Pancreas (tissue), 10 donors: ENCODE measurements at regions of chr1 and their contacts with region 1.

Region 1: GRCh38 chr1:1402081-1402900 is 3.2 kb upstream of the CCNL2 start:
- DNase-seq: peak in 3 of 6 donors; percentile 43 to 54 (median 50)
- ATAC-seq: no peak
- H3K4me3 ChIP-seq: no peak overlapping the region
- H3K27ac ChIP-seq: no peak overlapping the region
- H3K4me1 ChIP-seq: peaks cover 12 to 30% (median 23%) of the 10 kb centered on the region in 3 donors
- H3K27me3 ChIP-seq: no peaks in the 10 kb centered on the region
- CTCF ChIP-seq: peak in 3 of 4 donors; percentile 15 to 24 (median 21)

Region 2: DNA sequence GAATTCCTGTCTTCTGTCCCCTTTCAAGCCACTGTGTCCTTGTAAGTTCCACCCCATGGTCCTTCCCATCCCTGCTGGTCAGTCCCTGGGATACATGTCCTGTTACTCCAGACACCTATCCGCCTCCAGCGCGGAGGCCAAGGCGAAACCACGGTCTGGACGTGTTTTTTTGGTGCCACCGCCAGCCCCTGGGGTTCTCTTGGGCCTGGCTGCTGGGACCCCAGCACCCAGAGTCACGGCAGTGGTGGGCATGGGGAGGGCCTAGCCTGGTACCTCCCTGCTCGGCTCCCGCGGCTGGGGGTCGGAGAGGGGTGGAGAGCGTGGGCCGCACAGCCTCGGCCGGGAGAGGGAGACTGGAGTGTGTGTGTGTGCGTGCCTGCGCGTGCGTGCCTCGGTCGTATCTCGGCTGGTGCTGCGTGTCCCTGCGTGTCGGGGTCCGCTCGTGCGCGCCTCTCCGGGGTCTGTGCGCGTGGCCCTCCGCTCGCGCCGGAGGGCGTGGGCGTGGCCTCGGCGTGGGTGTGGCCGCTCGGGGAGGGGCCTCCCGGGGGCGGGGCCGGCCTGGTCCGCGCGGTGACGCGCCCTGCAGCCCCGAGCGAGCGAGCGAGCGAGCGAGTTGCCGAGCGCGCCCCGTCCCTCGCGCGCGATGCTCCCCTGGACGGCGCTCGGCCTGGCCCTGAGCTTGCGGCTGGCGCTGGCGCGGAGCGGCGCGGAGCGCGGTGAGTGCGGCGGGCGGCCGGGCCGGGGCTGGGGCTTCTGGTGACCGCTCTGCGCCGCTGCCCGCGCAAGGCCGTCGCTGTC is 33.0 kb after region 1 on chr1 and contains the start of gene VWA1:
- intact Hi-C with region 1: loop called in 2 of 3 experiments (anchors 5 kb)
- DNase-seq: peak; percentile 69 to 95 (median 80)
- ATAC-seq: peak; percentile 33 to 69 (median 46)
- H3K4me3 ChIP-seq: peak within 1 kb of the TSS; percentile 54 to 76 (median 58)
- H3K27ac ChIP-seq: peak within 1 kb of the TSS; percentile 81 to 96 (median 92)
- H3K4me1 ChIP-seq: peaks cover 26 to 69% (median 49%) of the 10 kb centered on the region in 3 donors
- H3K27me3 ChIP-seq: no peaks in the 10 kb centered on the region
- CTCF ChIP-seq: no peak
- total RNA-seq, gene VWA1: 25.4 to 138 (median 52.9) TPM

Region 3: DNA sequence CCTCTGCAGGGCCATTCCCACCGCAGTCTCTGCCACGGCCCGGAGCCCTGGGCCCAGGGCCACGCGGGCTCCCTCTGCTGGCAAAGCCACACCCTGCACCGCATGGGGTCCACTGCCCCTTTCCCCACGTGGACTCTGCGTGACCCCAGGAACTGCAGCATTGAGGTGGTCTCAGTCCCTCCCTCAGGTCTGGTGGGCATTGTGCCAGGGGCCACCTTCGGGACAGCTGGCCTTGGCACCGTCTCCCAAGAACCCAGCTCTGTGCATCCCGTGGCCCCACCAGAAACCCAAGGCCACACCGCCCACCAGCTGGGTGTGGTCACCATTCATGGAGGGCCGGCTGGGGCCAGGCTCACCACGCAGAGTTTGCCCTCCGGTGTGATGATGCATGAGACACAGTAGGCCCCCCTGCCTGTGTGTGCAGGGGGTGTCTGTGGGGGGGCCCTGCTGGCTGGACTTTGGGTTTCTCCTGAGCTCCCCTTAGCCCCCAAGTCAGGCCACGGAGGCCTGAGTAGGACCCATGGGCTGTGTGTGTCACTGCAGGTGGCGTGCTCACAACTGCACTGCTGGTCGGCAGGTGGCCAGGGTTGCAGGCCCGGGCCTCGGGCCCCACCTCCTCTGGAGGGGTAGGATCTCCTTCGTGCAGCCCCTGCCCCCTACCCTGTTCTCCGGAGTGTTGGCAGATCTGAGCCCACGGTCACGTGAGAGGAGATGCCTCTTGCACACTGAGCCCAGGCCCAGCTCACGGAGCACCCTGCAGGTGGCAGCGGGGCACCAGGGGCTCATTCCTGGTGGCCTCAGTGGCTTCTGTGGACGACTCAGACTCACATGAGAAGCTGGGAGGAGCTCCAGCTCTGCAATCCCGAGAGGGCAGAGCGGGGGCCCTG is 39.0 kb after region 1 on chr1:
- intact Hi-C with region 1: loop called in 2 of 3 experiments (anchors 5 kb)
- DNase-seq: peak; percentile 44 to 87 (median 72)
- ATAC-seq: peak; percentile 63 to 72 (median 65)
- H3K4me3 ChIP-seq: no peak overlapping the region
- H3K27ac ChIP-seq: peak overlapping the region in 2 of 4 donors; percentile 20 to 53
- H3K4me1 ChIP-seq: peaks cover 33 to 34% (median 33%) of the 10 kb centered on the region in 3 donors
- H3K27me3 ChIP-seq: no peaks in the 10 kb centered on the region
- CTCF ChIP-seq: peak; percentile 80 to 93 (median 88)